Naive thymus-derived CD4-positive, alpha-beta T cell (primary cell): ENCODE measurements at regions of chr18 and their contacts with region 1.

Region 1: GRCh38 chr18:68714609-68715496 is at the start of gene TMX3:
- DNase-seq: peak; percentile 86 to 93 (median 90)
- ATAC-seq: peak; percentile 99
- H3K4me3 ChIP-seq: peak within 1 kb of the TSS; percentile 86
- H3K4me3 Mint-ChIP-seq: peak within 1 kb of the TSS; percentile 93 to 100 (median 96)
- H3K27ac ChIP-seq: peak within 1 kb of the TSS; percentile 74
- H3K27ac Mint-ChIP-seq: peak within 1 kb of the TSS; percentile 88 to 98 (median 95)
- H3K4me1 ChIP-seq: peaks cover 4 to 17% of the 10 kb centered on the region in 2 donors
- H3K4me1 Mint-ChIP-seq: peaks cover 21 to 61% (median 53%) of the 10 kb centered on the region in 7 donors
- H3K27me3 ChIP-seq: no peaks in the 10 kb centered on the region
- H3K27me3 Mint-ChIP-seq: no peaks in the 10 kb centered on the region
- total RNA-seq, gene TMX3: 42.0 to 76.5 (median 63.2) TPM

Region 2: DNA sequence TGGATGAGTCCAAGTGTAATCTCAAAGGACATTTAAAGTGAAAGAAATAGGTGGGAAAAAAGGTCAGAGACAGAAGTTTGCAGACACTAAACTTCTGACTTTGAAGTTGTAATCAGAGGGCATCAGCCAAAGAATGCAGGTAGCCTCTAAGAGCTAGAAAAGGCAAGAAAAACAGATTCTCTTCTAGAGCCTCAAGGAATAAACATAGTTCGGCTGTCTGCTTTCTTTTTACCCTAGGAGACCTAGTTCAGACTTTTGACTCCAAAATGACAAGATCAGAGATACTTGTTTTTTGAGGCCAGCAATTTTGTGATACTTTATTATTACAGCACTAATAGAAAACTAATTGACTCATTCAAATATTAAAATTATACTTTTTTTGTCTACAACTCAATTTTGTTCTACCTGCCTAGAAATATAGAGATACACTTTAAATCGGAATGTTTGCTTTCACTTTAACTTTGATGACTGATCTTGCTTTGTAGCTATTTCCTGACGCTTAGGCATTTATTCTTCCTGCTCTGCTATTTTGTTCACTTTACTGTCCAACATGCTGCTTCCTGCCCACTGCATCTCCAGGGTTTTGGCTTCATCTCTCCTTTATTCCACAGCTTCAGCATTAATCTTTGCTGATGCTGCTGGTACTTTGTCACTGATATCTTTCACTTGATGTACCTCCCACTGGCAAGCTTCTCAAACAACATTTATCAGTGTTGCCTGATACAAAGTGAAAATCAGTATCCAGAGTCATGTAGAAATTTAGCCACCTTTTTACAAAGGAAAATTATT is 1470.9 kb before region 1 on chr18:
- CTCF ChIA-PET with region 1: no interaction called
- POLR2A ChIA-PET with region 1: no interaction called
- intact Hi-C with region 1: loop called in 1 of 2 experiments (anchors 5 kb)
- DNase-seq: no peak
- ATAC-seq: no peak
- H3K4me3 ChIP-seq: peak overlapping the region; percentile 22
- H3K4me3 Mint-ChIP-seq: peak overlapping the region; percentile 1 to 96 (median 82)
- H3K27ac ChIP-seq: no peak overlapping the region
- H3K27ac Mint-ChIP-seq: peak overlapping the region; percentile 13 to 91 (median 73)
- H3K4me1 ChIP-seq: peaks cover 0 to 20% of the 10 kb centered on the region in 2 donors
- H3K4me1 Mint-ChIP-seq: peaks cover 6 to 46% (median 29%) of the 10 kb centered on the region in 7 donors
- H3K27me3 ChIP-seq: no peaks in the 10 kb centered on the region
- H3K27me3 Mint-ChIP-seq: no peaks in the 10 kb centered on the region

Region 3: GRCh38 chr18:68735483-68736343 is 20.9 kb after region 1 on chr18:
- CTCF ChIA-PET with region 1: no interaction called
- POLR2A ChIA-PET with region 1: interaction called, 3 read pairs
- intact Hi-C with region 1: loop called (anchors 1 kb)
- DNase-seq: peak in 5 of 9 donors; percentile 28 to 46 (median 36)
- ATAC-seq: peak; percentile 78
- H3K4me3 ChIP-seq: no peak overlapping the region
- H3K4me3 Mint-ChIP-seq: no peak overlapping the region
- H3K27ac ChIP-seq: no peak overlapping the region
- H3K27ac Mint-ChIP-seq: no peak overlapping the region
- H3K4me1 ChIP-seq: no peaks in the 10 kb centered on the region
- H3K4me1 Mint-ChIP-seq: peaks cover 0 to 5% (median 0%) of the 10 kb centered on the region in 7 donors
- H3K27me3 ChIP-seq: no peaks in the 10 kb centered on the region
- H3K27me3 Mint-ChIP-seq: no peaks in the 10 kb centered on the region

Region 4: GRCh38 chr18:68887410-68887809 is 172.6 kb after region 1 on chr18:
- CTCF ChIA-PET with region 1: no interaction called
- POLR2A ChIA-PET with region 1: no interaction called
- intact Hi-C with region 1: no loop called
- DNase-seq: no peak
- ATAC-seq: no peak
- H3K4me3 ChIP-seq: no peak overlapping the region
- H3K4me3 Mint-ChIP-seq: no peak overlapping the region
- H3K27ac ChIP-seq: no peak overlapping the region
- H3K27ac Mint-ChIP-seq: no peak overlapping the region
- H3K4me1 ChIP-seq: no peaks in the 10 kb centered on the region
- H3K4me1 Mint-ChIP-seq: no peaks in the 10 kb centered on the region
- H3K27me3 ChIP-seq: no peaks in the 10 kb centered on the region
- H3K27me3 Mint-ChIP-seq: no peaks in the 10 kb centered on the region

Region 5: GRCh38 chr18:69138088-69138487 is 423.2 kb after region 1 on chr18:
- CTCF ChIA-PET with region 1: no interaction called
- POLR2A ChIA-PET with region 1: no interaction called
- intact Hi-C with region 1: no loop called
- DNase-seq: no peak
- ATAC-seq: no peak
- H3K4me3 ChIP-seq: no peak overlapping the region
- H3K4me3 Mint-ChIP-seq: no peak overlapping the region
- H3K27ac ChIP-seq: no peak overlapping the region
- H3K27ac Mint-ChIP-seq: no peak overlapping the region
- H3K4me1 ChIP-seq: no peaks in the 10 kb centered on the region
- H3K4me1 Mint-ChIP-seq: no peaks in the 10 kb centered on the region
- H3K27me3 ChIP-seq: no peaks in the 10 kb centered on the region
- H3K27me3 Mint-ChIP-seq: peaks cover 0 to 3% (median 0%) of the 10 kb centered on the region in 5 donors

Region 6: GRCh38 chr18:70205421-70206397 is 1490.9 kb after region 1 on chr18 and contains the start of gene RTTN:
- CTCF ChIA-PET with region 1: interaction called, 3 read pairs
- POLR2A ChIA-PET with region 1: interaction called, 7 read pairs
- intact Hi-C with region 1: loop called (anchors 1 kb)
- DNase-seq: peak; percentile 88 to 95 (median 92)
- ATAC-seq: peak; percentile 96
- H3K4me3 ChIP-seq: peak within 1 kb of the TSS; percentile 91
- H3K4me3 Mint-ChIP-seq: peak within 1 kb of the TSS; percentile 90 to 99 (median 97)
- H3K27ac ChIP-seq: peak within 1 kb of the TSS; percentile 87
- H3K27ac Mint-ChIP-seq: peak within 1 kb of the TSS; percentile 97 to 100 (median 99)
- H3K4me1 ChIP-seq: peaks cover 5 to 9% of the 10 kb centered on the region in 2 donors
- H3K4me1 Mint-ChIP-seq: peaks cover 8 to 42% (median 34%) of the 10 kb centered on the region in 7 donors
- H3K27me3 ChIP-seq: no peaks in the 10 kb centered on the region
- H3K27me3 Mint-ChIP-seq: peaks cover 0 to 11% (median 0%) of the 10 kb centered on the region in 5 donors
- total RNA-seq, gene RTTN: 26.8 to 33.2 (median 28.2) TPM